Astrocyte of the cerebellum (primary cell): ENCODE measurements at regions of chr16 and their contacts with region 1.

Region 1: DNA sequence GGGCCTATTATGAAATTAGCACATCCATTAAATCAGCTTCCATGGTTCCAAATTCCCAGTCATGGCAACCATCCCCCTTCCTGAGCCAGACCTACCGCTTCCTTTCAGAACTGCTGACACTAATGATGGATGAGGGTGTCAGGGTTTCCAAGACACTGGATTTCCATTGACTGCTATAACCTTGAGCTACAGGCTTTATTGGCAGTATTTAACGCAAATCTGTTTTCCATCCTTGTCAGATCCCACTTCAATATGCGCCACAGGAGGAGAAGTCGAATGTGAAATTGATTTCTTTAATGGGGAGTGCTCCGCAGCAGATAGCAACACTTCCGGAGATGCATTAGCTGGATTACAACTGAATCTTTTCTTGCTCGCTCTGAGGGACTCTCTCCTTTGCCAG is 197.1 kb downstream of the HS3ST4 start:
- DNase-seq: no peak
- H3K4me3 ChIP-seq: no peak overlapping the region
- CTCF ChIP-seq: no peak

Region 2: GRCh38 chr16:25854141-25854540 is 34.7 kb before region 1 on chr16:
- in situ Hi-C with region 1: loop called (anchors 5 kb)
- DNase-seq: no peak
- H3K4me3 ChIP-seq: no peak overlapping the region
- CTCF ChIP-seq: no peak